B cell (primary cell): ENCODE measurements at regions of chr17 and their contacts with region 1.

Region 1: GRCh38 chr17:1365445-1366039 is 34.5 kb downstream of the YWHAE start:
- DNase-seq: peak; percentile 85
- ATAC-seq: peak; percentile 69
- H3K4me3 ChIP-seq: no peak overlapping the region
- H3K4me3 Mint-ChIP-seq: peak overlapping the region; percentile 39
- H3K27ac ChIP-seq: peak overlapping the region; percentile 42 to 62
- H3K27ac Mint-ChIP-seq: peak overlapping the region; percentile 59
- H3K4me1 ChIP-seq: peaks cover 36 to 51% of the 10 kb centered on the region in 2 donors
- H3K4me1 Mint-ChIP-seq: peaks cover 56% of the 10 kb centered on the region
- H3K27me3 ChIP-seq: no peaks in the 10 kb centered on the region
- H3K27me3 Mint-ChIP-seq: no peaks in the 10 kb centered on the region
- CTCF ChIP-seq: peak; percentile 89

Region 2: GRCh38 chr17:1351971-1352370 is 13.6 kb before region 1 on chr17:
- CTCF ChIA-PET with region 1: interaction called, 14 read pairs
- POLR2A ChIA-PET with region 1: no interaction called
- intact Hi-C with region 1: no loop called
- DNase-seq: no peak
- ATAC-seq: no peak
- H3K4me3 ChIP-seq: no peak overlapping the region
- H3K4me3 Mint-ChIP-seq: no peak overlapping the region
- H3K27ac ChIP-seq: no peak overlapping the region
- H3K27ac Mint-ChIP-seq: no peak overlapping the region
- H3K4me1 ChIP-seq: peaks cover 0 to 7% of the 10 kb centered on the region in 2 donors
- H3K4me1 Mint-ChIP-seq: peaks cover 7% of the 10 kb centered on the region
- H3K27me3 ChIP-seq: no peaks in the 10 kb centered on the region
- H3K27me3 Mint-ChIP-seq: no peaks in the 10 kb centered on the region
- CTCF ChIP-seq: no peak

Region 3: GRCh38 chr17:1399679-1400512 is 34.4 kb after region 1 on chr17 and contains the start of gene YWHAE:
- CTCF ChIA-PET with region 1: interaction called, 17 read pairs
- POLR2A ChIA-PET with region 1: interaction called, 10 read pairs
- intact Hi-C with region 1: loop called (anchors 2 kb)
- DNase-seq: peak; percentile 96
- ATAC-seq: peak; percentile 81
- H3K4me3 ChIP-seq: peak within 1 kb of the TSS; percentile 75 to 94 (median 85)
- H3K4me3 Mint-ChIP-seq: peak within 1 kb of the TSS; percentile 100
- H3K27ac ChIP-seq: peak within 1 kb of the TSS; percentile 84 to 94
- H3K27ac Mint-ChIP-seq: peak within 1 kb of the TSS; percentile 99
- H3K4me1 ChIP-seq: peaks cover 20 to 35% of the 10 kb centered on the region in 2 donors
- H3K4me1 Mint-ChIP-seq: peaks cover 32% of the 10 kb centered on the region
- H3K27me3 ChIP-seq: no peaks in the 10 kb centered on the region
- H3K27me3 Mint-ChIP-seq: no peaks in the 10 kb centered on the region
- CTCF ChIP-seq: no peak
- total RNA-seq, gene YWHAE: 149 and 151 TPM in 2 replicates

Region 4: GRCh38 chr17:1413281-1413791 is 47.8 kb after region 1 on chr17:
- CTCF ChIA-PET with region 1: no interaction called
- POLR2A ChIA-PET with region 1: no interaction called
- intact Hi-C with region 1: no loop called
- DNase-seq: no peak
- ATAC-seq: no peak
- H3K4me3 ChIP-seq: no peak overlapping the region
- H3K4me3 Mint-ChIP-seq: no peak overlapping the region
- H3K27ac ChIP-seq: no peak overlapping the region
- H3K27ac Mint-ChIP-seq: no peak overlapping the region
- H3K4me1 ChIP-seq: no peaks in the 10 kb centered on the region
- H3K4me1 Mint-ChIP-seq: peaks cover 2% of the 10 kb centered on the region
- H3K27me3 ChIP-seq: no peaks in the 10 kb centered on the region
- H3K27me3 Mint-ChIP-seq: no peaks in the 10 kb centered on the region
- CTCF ChIP-seq: no peak

Region 5: GRCh38 chr17:1474402-1475189 is 109.1 kb after region 1 on chr17:
- CTCF ChIA-PET with region 1: interaction called, 23 read pairs
- POLR2A ChIA-PET with region 1: interaction called, 13 read pairs
- intact Hi-C with region 1: loop called (anchors 5 kb)
- DNase-seq: peak; percentile 75
- ATAC-seq: peak; percentile 56
- H3K4me3 ChIP-seq: peak overlapping the region in 1 of 5 experiments; percentile 1
- H3K4me3 Mint-ChIP-seq: peak overlapping the region; percentile 82
- H3K27ac ChIP-seq: peak overlapping the region; percentile 10 to 81
- H3K27ac Mint-ChIP-seq: peak overlapping the region; percentile 81
- H3K4me1 ChIP-seq: peaks cover 36 to 66% of the 10 kb centered on the region in 2 donors
- H3K4me1 Mint-ChIP-seq: peaks cover 42% of the 10 kb centered on the region
- H3K27me3 ChIP-seq: no peaks in the 10 kb centered on the region
- H3K27me3 Mint-ChIP-seq: no peaks in the 10 kb centered on the region
- CTCF ChIP-seq: no peak

Region 6: DNA sequence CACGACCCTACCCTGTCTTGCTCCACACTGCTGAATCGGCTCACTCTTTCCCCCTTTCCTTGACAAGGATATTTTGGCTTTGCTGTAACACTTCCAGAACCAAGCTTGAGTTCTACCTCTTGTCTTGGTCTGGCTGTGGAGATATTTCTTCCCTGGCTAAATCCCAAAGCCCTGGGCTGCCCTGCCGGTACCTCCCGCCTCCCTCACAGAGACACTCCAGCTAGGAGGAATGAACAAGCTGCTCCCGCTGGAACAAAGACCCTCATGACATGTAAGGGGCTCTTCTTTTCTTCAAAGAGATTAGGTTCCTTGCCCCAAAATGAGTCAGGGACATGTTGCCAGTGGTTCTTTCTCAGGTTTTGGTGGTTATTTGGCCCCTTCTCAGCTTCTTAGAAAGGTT is 140.0 kb after region 1 on chr17:
- CTCF ChIA-PET with region 1: interaction called, 318 read pairs
- POLR2A ChIA-PET with region 1: no interaction called
- intact Hi-C with region 1: no loop called
- DNase-seq: no peak
- ATAC-seq: no peak
- H3K4me3 ChIP-seq: no peak overlapping the region
- H3K4me3 Mint-ChIP-seq: no peak overlapping the region
- H3K27ac ChIP-seq: no peak overlapping the region
- H3K27ac Mint-ChIP-seq: no peak overlapping the region
- H3K4me1 ChIP-seq: no peaks in the 10 kb centered on the region
- H3K4me1 Mint-ChIP-seq: no peaks in the 10 kb centered on the region
- H3K27me3 ChIP-seq: no peaks in the 10 kb centered on the region
- H3K27me3 Mint-ChIP-seq: no peaks in the 10 kb centered on the region
- CTCF ChIP-seq: no peak